Activated CD4-positive, alpha-beta T cell treated with anti-CD3 and anti-CD28 coated beads for 36 hours (primary cell): ENCODE measurements at regions of chr6 and their contacts with region 1.

Region 1: GRCh38 chr6:134123666-134124208 is 71.3 kb upstream of the SLC2A12 start:
- DNase-seq: peak; percentile 34
- ATAC-seq: peak; percentile 97
- H3K4me3 Mint-ChIP-seq: no peak overlapping the region
- H3K27ac Mint-ChIP-seq: peak overlapping the region; percentile 51
- H3K4me1 Mint-ChIP-seq: peaks cover 2% of the 10 kb centered on the region
- H3K27me3 Mint-ChIP-seq: no peaks in the 10 kb centered on the region

Region 2: DNA sequence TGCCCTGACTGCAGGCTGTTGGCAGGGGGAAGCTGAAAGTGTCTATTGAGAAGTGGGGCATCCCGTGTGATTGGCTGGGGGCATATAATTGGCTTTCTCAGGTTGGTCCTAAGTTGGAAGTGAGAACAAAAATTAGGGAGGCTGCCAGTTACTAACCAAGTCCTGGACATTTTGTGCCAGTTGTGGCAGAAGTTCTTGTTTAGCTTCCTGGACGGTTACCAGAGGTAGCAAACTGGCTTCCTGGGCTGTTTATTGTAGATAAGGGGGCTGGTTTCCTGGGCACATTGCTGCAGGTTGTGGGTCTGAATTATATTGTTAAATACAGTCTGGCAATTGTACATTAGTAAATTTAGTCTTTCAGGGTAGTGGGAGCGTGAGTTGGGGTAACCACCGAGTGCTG is 20.7 kb before region 1 on chr6:
- CTCF ChIA-PET with region 1: interaction called, 84 read pairs
- POLR2A ChIA-PET with region 1: no interaction called
- intact Hi-C with region 1: no loop called
- DNase-seq: no peak
- ATAC-seq: no peak
- H3K4me3 Mint-ChIP-seq: no peak overlapping the region
- H3K27ac Mint-ChIP-seq: no peak overlapping the region
- H3K4me1 Mint-ChIP-seq: no peaks in the 10 kb centered on the region
- H3K27me3 Mint-ChIP-seq: peaks cover 15% of the 10 kb centered on the region

Region 3: GRCh38 chr6:134111062-134111677 is 12.6 kb before region 1 on chr6:
- CTCF ChIA-PET with region 1: interaction called, 84 read pairs
- POLR2A ChIA-PET with region 1: no interaction called
- intact Hi-C with region 1: no loop called
- DNase-seq: peak; percentile 64
- ATAC-seq: peak; percentile 88
- H3K4me3 Mint-ChIP-seq: no peak overlapping the region
- H3K27ac Mint-ChIP-seq: no peak overlapping the region
- H3K4me1 Mint-ChIP-seq: peaks cover 3% of the 10 kb centered on the region
- H3K27me3 Mint-ChIP-seq: peaks cover 7% of the 10 kb centered on the region

Region 4: GRCh38 chr6:134145786-134146185 is 22.0 kb after region 1 on chr6:
- CTCF ChIA-PET with region 1: interaction called, 21 read pairs
- POLR2A ChIA-PET with region 1: no interaction called
- intact Hi-C with region 1: no loop called
- DNase-seq: no peak
- ATAC-seq: no peak
- H3K4me3 Mint-ChIP-seq: no peak overlapping the region
- H3K27ac Mint-ChIP-seq: no peak overlapping the region
- H3K4me1 Mint-ChIP-seq: peaks cover 4% of the 10 kb centered on the region
- H3K27me3 Mint-ChIP-seq: no peaks in the 10 kb centered on the region

Region 5: GRCh38 chr6:134822920-134823709 is 699.4 kb after region 1 on chr6:
- CTCF ChIA-PET with region 1: interaction called, 19 read pairs
- POLR2A ChIA-PET with region 1: no interaction called
- intact Hi-C with region 1: loop called (anchors 1 kb)
- DNase-seq: peak; percentile 36
- ATAC-seq: peak; percentile 86
- H3K4me3 Mint-ChIP-seq: no peak overlapping the region
- H3K27ac Mint-ChIP-seq: no peak overlapping the region
- H3K4me1 Mint-ChIP-seq: peaks cover 4% of the 10 kb centered on the region
- H3K27me3 Mint-ChIP-seq: peaks cover 2% of the 10 kb centered on the region

Region 6: GRCh38 chr6:134882426-134883038 is 758.8 kb after region 1 on chr6:
- CTCF ChIA-PET with region 1: interaction called, 9 read pairs
- POLR2A ChIA-PET with region 1: no interaction called
- intact Hi-C with region 1: loop called (anchors 1 to 2 kb)
- DNase-seq: peak; percentile 73
- ATAC-seq: no peak
- H3K4me3 Mint-ChIP-seq: no peak overlapping the region
- H3K27ac Mint-ChIP-seq: no peak overlapping the region
- H3K4me1 Mint-ChIP-seq: no peaks in the 10 kb centered on the region
- H3K27me3 Mint-ChIP-seq: peaks cover 6% of the 10 kb centered on the region